MCF 10A (cell line): ENCODE measurements at regions of chrX and their contacts with region 1.

Region 1: GRCh38 chrX:107118322-107119147 is at the start of gene RBM41:
- DNase-seq: peak; percentile 84
- H3K4me3 Mint-ChIP-seq: peak within 1 kb of the TSS; percentile 92
- H3K27ac Mint-ChIP-seq: peak within 1 kb of the TSS; percentile 94
- H3K4me1 Mint-ChIP-seq: peaks cover 33% of the 10 kb centered on the region
- H3K27me3 Mint-ChIP-seq: peaks cover 74% of the 10 kb centered on the region
- CTCF ChIP-seq: no peak
- total RNA-seq, gene RBM41: 20.2 and 24.7 TPM in 2 replicates

Region 2: GRCh38 chrX:106999002-106999975 is 119.2 kb before region 1 on chrX:
- CTCF ChIA-PET with region 1: no interaction called
- POLR2A ChIA-PET with region 1: no interaction called
- intact Hi-C with region 1: no loop called
- DNase-seq: peak; percentile 62
- H3K4me3 Mint-ChIP-seq: peak overlapping the region; percentile 72
- H3K27ac Mint-ChIP-seq: no peak overlapping the region
- H3K4me1 Mint-ChIP-seq: peaks cover 15% of the 10 kb centered on the region
- H3K27me3 Mint-ChIP-seq: peaks cover 76% of the 10 kb centered on the region
- CTCF ChIP-seq: peak; percentile 19

Region 3: DNA sequence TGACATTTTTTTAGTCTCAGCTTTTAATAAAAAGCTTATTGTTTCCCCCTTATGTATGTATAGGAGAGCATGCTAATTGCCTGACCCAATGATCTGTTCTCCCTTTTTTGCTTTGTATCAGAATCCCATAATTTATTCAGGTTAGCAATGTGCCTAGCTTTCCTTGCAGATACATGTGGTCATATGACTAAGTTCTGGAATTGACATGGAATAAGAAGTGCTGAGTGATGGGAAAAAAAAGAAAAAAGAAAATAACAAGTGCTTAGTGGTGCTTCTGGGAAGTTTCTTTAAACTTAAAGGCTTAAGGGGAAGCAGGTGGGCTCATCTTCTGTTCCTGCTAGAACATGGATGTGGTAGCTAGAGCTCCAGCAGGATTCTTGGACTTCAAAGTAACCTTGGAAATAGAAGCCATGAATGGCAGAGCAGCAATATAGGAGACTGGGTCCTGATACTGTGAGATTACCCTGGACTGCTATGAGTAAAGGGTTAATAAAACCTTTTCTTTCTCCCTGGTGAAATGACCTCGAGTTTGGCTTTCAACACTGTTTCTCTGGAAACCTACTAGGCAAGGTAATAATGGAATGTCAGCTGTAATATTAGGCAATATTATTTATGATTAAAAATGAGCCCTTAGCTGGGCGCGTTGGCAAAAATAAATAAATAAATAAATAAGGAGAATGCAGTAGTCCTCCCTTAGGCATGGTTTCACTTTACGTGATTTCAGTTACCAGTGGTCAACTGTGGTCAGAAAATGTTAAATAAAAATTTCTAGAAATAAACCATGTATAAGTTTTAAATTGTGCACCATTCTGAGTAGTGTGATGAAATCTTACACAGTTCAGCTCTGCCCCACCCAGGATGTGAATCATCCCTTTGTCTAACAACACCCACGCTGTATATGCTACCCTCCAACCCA is 16.8 kb after region 1 on chrX:
- CTCF ChIA-PET with region 1: interaction called, 3 read pairs
- POLR2A ChIA-PET with region 1: interaction called, 15 read pairs
- intact Hi-C with region 1: no loop called
- DNase-seq: peak; percentile 79
- H3K4me3 Mint-ChIP-seq: peak overlapping the region; percentile 56
- H3K27ac Mint-ChIP-seq: peak overlapping the region; percentile 96
- H3K4me1 Mint-ChIP-seq: peaks cover 15% of the 10 kb centered on the region
- H3K27me3 Mint-ChIP-seq: peaks cover 55% of the 10 kb centered on the region
- CTCF ChIP-seq: no peak

Region 4: DNA sequence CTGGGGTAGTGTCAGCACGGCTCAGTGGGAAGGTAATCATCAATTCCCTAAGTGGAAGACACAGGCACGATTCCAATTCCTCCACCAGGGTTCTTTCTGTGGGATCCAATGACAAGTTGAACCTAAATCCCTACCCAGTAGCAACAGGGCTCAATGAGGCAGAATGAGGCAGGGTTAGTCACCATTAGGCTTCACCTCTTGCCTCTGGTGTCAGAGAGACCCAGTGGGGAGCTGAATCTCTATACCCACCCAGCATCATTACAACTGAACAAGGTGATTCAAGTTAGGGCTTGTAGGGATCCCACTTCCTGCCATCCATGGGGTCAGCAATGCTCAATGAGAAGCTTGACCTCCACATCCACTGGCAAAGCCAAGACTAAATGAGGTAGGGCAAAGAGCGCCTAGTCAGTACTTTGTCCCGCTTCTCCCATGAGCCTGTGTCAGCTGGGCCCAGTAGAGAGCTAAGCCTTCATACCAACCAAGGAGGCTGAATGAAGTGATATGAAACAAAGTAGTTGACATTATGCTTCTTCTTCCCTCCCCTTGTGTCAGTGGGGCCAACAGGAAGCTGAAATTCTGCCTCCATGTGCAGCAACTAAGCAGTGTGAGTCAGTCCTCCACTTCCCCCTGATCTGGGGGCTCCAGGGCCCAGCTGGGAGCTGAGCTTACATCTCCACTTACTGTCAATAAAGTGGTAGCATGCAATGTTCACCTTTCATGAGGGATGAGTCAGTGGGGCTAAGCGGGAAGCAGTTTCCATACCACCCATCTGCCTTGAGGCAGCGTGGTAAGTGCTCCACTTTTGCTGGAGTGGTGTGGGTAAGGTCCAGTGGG is 36.5 kb after region 1 on chrX:
- CTCF ChIA-PET with region 1: no interaction called
- POLR2A ChIA-PET with region 1: interaction called, 13 read pairs
- intact Hi-C with region 1: no loop called
- DNase-seq: peak; percentile 64
- H3K4me3 Mint-ChIP-seq: peak overlapping the region; percentile 69
- H3K27ac Mint-ChIP-seq: no peak overlapping the region
- H3K4me1 Mint-ChIP-seq: no peaks in the 10 kb centered on the region
- H3K27me3 Mint-ChIP-seq: peaks cover 19% of the 10 kb centered on the region
- CTCF ChIP-seq: no peak

Region 5: GRCh38 chrX:107205770-107206696 is 87.5 kb after region 1 on chrX and contains the starts of genes DNAAF6 and NUP62CL:
- CTCF ChIA-PET with region 1: no interaction called
- POLR2A ChIA-PET with region 1: interaction called, 11 read pairs
- intact Hi-C with region 1: loop called (anchors 5 kb)
- DNase-seq: peak; percentile 75
- H3K4me3 Mint-ChIP-seq: peak within 1 kb of the TSS; percentile 84
- H3K27ac Mint-ChIP-seq: peak within 1 kb of the TSS; percentile 70
- H3K4me1 Mint-ChIP-seq: no peaks in the 10 kb centered on the region
- H3K27me3 Mint-ChIP-seq: peaks cover 11% of the 10 kb centered on the region
- CTCF ChIP-seq: no peak
- total RNA-seq, gene DNAAF6: not detected in 2 replicates
- total RNA-seq, gene NUP62CL: 4.8 and 7.3 TPM in 2 replicates

Region 6: GRCh38 chrX:107227780-107228485 is 109.4 kb after region 1 on chrX:
- CTCF ChIA-PET with region 1: no interaction called
- POLR2A ChIA-PET with region 1: no interaction called
- intact Hi-C with region 1: no loop called
- DNase-seq: no peak
- H3K4me3 Mint-ChIP-seq: no peak overlapping the region
- H3K27ac Mint-ChIP-seq: no peak overlapping the region
- H3K4me1 Mint-ChIP-seq: no peaks in the 10 kb centered on the region
- H3K27me3 Mint-ChIP-seq: peaks cover 46% of the 10 kb centered on the region
- CTCF ChIP-seq: no peak